Mammary epithelial cell (primary cell): ENCODE measurements at regions of chr12 and their contacts with region 1.

Region 1: GRCh38 chr12:4604684-4605193 is 42.7 kb downstream of the DYRK4 start:
- DNase-seq: peak; percentile 81
- H3K4me3 ChIP-seq: peak overlapping the region; percentile 91 to 99 (median 96)
- H3K27ac ChIP-seq: peak overlapping the region; percentile 61
- H3K4me1 ChIP-seq: no peaks in the 10 kb centered on the region
- H3K27me3 ChIP-seq: no peaks in the 10 kb centered on the region
- CTCF ChIP-seq: peak; percentile 97 to 99

Region 2: GRCh38 chr12:4215229-4216186 is 389.2 kb before region 1 on chr12:
- CTCF ChIA-PET with region 1: no interaction called
- dilution Hi-C with region 1: no loop called
- in situ Hi-C with region 1: no loop called
- intact Hi-C with region 1: loop called (anchors 5 kb)
- DNase-seq: peak; percentile 81
- H3K4me3 ChIP-seq: no peak overlapping the region
- H3K27ac ChIP-seq: peak overlapping the region; percentile 29
- H3K4me1 ChIP-seq: peaks cover 24% of the 10 kb centered on the region
- H3K27me3 ChIP-seq: no peaks in the 10 kb centered on the region
- CTCF ChIP-seq: no peak

Region 3: DNA sequence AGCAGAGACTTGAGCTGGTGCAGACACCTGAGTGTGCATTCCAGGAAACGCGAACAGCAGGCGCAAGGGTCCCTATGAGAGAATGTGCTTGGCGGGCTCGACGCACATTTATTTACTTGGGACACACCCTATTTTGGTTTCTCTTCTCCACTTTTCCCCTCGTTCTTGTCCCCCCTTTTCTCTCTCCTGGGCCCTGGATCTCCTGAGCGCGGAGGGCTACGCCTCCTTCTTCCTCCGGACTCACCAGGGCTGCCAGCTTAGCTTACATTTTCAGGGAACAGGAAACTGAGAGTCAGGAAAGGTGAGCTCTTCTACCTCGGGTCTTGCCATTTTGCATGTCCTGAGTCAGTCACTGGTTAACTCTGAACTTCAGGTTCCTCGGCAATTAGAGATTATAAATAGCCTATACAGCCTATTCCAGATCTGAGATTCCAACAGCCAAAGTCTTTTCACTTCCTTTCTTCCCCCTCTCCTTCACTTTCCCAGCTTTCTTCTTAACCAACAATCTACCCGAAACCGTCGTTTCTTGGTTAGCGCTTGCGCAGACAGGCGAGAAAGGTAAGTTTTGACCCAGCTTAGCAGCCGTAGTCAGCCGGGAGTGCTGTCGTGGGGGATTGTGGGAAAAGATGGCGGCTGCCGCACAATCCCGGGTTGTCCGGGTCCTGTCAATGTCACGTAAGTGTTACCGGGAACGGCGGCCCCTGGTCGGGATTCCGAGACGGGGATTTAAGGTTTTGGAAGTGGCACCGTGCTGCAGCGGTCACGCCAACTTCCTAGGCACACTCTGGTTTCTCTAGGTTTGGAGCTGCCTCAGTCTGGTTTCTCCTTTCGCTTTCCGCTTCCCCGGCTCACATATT is 44.0 kb after region 1 on chr12 and contains the starts of genes AKAP3 and NDUFA9:
- CTCF ChIA-PET with region 1: interaction called, 4 read pairs
- dilution Hi-C with region 1: no loop called
- in situ Hi-C with region 1: no loop called
- intact Hi-C with region 1: loop called (anchors 2 kb)
- DNase-seq: peak; percentile 83
- H3K4me3 ChIP-seq: peak within 1 kb of the TSS; percentile 67 to 90 (median 76)
- H3K27ac ChIP-seq: peak within 1 kb of the TSS; percentile 95
- H3K4me1 ChIP-seq: peaks cover 19% of the 10 kb centered on the region
- H3K27me3 ChIP-seq: no peaks in the 10 kb centered on the region
- CTCF ChIP-seq: no peak
- total RNA-seq, gene AKAP3: 0.83 to 1.5 TPM
- total RNA-seq, gene NDUFA9: 37.8 to 94.1 TPM